Left colon (tissue), 2 donors: ENCODE measurements at regions of chr1 and their contacts with region 1.

Region 1: DNA sequence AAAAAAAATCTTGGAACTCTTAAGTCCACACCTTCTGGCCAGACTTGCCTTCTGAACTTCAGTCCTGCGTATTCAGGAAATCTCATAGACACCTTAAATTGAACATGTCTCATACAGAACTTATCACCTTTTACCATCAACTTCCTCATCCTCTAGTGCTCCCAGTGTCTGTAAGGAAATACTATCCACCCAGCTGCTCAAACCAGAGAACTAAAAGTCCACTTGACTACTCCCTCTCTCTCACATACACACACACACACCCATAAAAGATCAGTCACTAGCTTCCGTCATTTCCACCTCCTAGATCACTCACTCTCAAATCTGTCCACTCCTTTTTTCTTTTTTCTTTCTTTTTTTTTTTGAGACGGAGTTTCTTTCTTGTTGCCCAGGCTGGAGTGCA is 10.9 kb upstream of the CAP1 start:
- DNase-seq: no peak
- ATAC-seq: peak; percentile 90

Region 2: DNA sequence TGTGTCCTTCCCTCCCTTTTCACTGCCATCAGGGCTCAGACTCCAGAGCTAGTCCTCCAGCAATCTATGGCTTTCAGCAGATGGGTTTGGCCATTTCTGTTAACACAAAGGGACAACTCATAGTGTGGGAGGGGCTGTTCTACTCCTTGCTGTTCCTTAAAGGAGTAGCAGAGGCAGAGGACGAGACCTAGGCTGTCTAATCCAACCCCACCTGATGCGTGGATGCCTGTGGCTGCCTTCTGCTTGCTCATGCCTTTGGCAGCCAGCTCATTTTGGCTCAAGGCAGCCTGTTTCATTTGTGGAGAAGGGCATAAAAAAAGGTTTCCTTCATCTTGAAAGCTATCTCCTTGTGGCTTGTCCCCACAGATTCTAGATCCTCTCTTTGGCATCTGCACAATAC is 47.7 kb before region 1 on chr1:
- intact Hi-C with region 1: loop called in 1 of 2 experiments (anchors 5 kb)
- DNase-seq: no peak
- ATAC-seq: peak; percentile 46